ENCODE measurements at regions of chr18 and their contacts with region 1.

Region 1: DNA sequence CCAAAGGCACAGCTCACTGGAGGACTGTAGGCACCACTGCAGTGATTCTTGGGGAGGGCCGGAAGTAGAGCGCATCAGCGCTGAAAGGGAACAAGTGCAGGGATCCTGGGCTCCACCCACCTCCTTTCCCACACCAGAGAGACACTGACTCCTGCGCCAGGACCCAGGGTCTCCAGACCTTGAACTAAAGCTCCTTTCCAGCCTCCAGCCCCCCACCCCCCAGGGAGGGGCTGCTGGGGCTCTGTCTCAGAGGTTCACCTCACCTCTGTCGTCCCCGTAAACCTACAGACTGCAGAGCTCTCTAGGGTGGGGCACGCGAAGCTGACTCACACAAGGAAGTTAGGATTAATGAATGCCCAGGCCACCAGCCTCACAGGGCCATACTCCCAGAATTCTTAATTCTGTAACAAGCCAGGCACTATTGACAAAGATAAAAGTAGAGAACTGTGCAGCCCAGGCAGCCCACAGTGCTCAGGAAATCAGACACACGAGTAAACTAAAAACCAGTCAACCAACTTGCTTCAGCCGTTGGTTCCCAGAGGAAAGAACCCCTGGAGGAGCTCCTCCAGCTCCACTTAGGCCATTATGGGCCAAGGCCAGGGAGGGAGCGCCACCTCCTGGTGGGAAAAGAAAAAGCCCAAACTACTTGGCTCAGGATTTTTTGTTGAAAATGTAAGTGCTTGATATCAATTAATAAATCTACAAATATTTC is 45.1 kb upstream of the ACAA2 start:
- DNase-seq: peak; percentile 77
- H3K4me3 ChIP-seq: no peak overlapping the region
- H3K27ac ChIP-seq: peak overlapping the region; percentile 19
- H3K4me1 ChIP-seq: peaks cover 5% of the 10 kb centered on the region
- H3K27me3 ChIP-seq: no peaks in the 10 kb centered on the region
- CTCF ChIP-seq: peak; percentile 83 to 86
- POLR2A ChIP-seq: no peak

Region 2: DNA sequence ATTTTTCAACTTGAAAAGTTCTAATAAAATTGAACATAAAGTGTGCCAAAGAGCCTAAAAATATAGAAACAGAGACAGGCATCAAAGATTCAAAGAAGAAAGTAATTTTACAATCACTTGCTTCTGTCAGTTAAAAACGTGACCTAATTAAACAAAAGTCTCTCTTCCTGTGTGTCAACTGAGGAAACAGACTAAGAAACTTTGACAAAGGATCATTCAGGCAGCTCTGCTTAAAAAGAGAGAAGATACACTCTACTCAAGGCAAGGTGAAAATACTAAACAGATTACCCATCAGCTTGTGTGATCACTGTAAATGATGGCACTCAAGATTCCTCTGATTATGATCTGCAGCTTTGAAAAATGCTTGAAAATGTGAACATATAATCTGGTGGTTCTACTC is 445.8 kb before region 1 on chr18:
- CTCF ChIA-PET with region 1: no interaction called
- POLR2A ChIA-PET with region 1: no interaction called
- dilution Hi-C with region 1: no loop called
- intact Hi-C with region 1: no loop called
- DNase-seq: peak; percentile 35
- H3K4me3 ChIP-seq: no peak overlapping the region
- H3K27ac ChIP-seq: peak overlapping the region; percentile 56
- H3K4me1 ChIP-seq: peaks cover 18% of the 10 kb centered on the region
- H3K27me3 ChIP-seq: no peaks in the 10 kb centered on the region
- CTCF ChIP-seq: no peak
- POLR2A ChIP-seq: no peak

Region 3: DNA sequence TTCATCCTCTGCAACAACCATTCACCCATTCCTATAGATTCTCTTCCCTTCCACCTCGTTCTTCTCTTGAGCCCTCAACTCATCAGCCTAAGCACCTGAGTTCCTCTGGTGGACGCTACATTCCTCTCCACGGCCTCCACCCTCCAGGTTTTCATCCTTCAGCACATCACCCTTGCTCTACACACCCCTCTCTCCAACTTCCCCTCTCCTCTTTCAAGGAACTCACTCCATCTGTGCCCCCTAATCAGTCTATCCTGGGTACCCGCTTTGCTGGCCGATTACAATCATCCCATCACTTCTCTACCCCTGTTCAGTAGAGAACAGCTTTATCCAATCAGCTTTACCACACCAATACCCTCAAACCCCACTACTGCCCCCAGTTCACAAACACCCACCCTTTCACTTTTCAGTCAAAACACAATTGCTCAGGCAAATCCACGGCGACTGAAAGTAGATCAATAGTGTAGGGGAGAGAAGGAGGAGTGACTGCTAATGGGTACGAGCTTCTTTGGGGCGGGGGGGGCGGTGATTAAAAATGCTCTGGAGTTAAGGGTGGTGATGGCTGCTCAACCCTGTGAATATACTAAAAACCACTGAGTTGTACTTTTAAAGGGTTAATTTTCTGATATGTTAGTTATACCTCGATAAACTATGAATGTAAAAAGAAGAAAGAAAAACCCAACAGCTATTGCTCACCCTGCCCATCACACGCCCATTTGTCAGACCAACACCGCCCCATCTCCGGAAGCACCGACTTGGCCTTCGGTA is 398.9 kb before region 1 on chr18:
- CTCF ChIA-PET with region 1: interaction called, 33 read pairs
- POLR2A ChIA-PET with region 1: no interaction called
- dilution Hi-C with region 1: no loop called
- intact Hi-C with region 1: loop called (anchors 1 kb)
- DNase-seq: peak; percentile 8
- H3K4me3 ChIP-seq: peak overlapping the region; percentile 57 to 99 (median 87)
- H3K27ac ChIP-seq: peak overlapping the region; percentile 49
- H3K4me1 ChIP-seq: peaks cover 18% of the 10 kb centered on the region
- H3K27me3 ChIP-seq: no peaks in the 10 kb centered on the region
- CTCF ChIP-seq: no peak
- POLR2A ChIP-seq: no peak

Region 4: DNA sequence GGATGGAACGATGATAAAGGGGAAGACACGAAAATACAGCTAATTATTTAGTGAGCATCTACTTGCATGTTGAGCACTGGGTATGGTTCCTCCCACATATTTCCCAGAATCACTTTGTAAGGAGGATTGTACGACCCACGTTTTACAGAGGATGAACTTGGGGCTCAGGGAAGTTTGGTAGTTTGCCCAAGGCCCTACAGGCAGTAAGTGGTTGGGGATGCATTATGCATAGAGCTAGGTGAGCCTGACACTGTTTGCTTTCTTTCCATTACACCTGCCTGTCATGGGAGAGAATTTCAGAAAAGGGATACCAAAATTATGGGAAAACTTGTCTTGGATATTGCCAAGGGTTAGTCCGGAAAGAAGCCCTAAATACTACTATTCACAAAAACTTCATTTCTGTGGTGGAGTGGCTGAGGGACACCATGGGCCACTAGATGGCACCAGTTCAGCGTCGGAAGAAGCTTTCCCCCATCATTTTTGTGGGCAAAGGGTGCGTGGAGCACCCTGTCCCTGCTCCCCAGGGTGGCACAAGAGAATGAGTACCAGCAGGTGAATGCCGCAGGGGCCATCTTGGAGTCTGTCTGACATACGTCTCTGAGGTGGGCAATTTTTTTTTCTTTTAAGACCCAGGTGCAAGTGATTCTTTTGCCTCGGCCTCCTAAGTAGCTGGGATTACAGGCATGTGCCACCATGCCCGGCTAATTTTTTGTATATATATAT is 347.9 kb before region 1 on chr18:
- CTCF ChIA-PET with region 1: interaction called, 452 read pairs
- POLR2A ChIA-PET with region 1: no interaction called
- dilution Hi-C with region 1: loop called (anchors 25 kb)
- intact Hi-C with region 1: loop called (anchors 1 kb)
- DNase-seq: peak; percentile 51
- H3K4me3 ChIP-seq: no peak overlapping the region
- H3K27ac ChIP-seq: no peak overlapping the region
- H3K4me1 ChIP-seq: no peaks in the 10 kb centered on the region
- H3K27me3 ChIP-seq: peaks cover 3 to 4% of the 10 kb centered on the region in 2 experiments
- CTCF ChIP-seq: peak; percentile 74 to 81
- POLR2A ChIP-seq: no peak

Region 5: DNA sequence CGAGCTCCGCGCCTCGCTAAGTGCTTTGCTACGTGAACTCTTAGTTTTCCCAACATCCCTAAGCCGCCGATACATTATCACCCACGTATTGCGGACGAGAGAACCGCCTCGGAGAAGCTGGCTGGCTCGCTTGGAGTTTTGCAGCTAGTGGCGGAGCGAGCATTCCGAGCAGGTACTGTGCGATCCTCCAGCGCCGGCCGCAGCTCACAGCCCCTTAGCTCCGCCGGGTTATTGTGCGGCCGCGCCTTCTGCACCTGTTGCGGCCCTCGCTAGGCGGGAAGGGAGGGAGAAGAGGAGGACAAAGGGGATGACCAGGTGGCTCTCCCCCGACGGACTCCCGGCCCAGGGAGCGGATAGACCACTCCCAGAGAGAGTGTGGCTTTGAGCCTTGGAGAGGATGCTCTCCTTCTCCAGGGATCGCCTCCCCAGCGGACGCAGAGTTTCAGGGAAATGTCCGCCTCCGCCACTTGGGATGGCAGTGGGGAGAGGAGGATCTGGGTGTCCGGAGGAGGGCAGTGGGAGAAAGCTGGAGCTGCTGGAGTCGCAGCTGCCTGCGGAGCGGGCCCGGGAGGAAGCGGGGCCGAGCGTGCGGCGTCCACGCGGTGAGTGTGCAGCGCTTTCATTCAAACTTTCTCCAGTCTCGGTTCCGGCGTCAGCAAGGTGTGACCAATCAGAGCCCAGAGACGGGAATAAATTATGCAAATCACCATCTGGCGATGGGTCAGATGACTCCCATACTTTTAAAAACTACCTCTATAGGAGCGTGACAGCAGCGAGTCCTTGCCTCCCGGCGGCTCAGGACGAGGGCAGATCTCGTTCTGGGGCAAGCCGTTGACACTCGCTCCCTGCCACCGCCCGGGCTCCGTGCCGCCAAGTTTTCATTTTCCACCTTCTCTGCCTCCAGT is 296.9 kb before region 1 on chr18 and contains the start of gene LIPG:
- CTCF ChIA-PET with region 1: interaction called, 162 read pairs
- POLR2A ChIA-PET with region 1: no interaction called
- dilution Hi-C with region 1: no loop called
- intact Hi-C with region 1: loop called (anchors 1 kb)
- DNase-seq: peak; percentile 74
- H3K4me3 ChIP-seq: peak within 1 kb of the TSS; percentile 34 to 83 (median 67)
- H3K27ac ChIP-seq: peak within 1 kb of the TSS; percentile 49
- H3K4me1 ChIP-seq: peaks cover 37% of the 10 kb centered on the region
- H3K27me3 ChIP-seq: no peaks in the 10 kb centered on the region
- CTCF ChIP-seq: no peak
- POLR2A ChIP-seq: peak; percentile 69
- total RNA-seq, gene LIPG: 80.6 and 96.2 TPM in 2 replicates

Region 6: DNA sequence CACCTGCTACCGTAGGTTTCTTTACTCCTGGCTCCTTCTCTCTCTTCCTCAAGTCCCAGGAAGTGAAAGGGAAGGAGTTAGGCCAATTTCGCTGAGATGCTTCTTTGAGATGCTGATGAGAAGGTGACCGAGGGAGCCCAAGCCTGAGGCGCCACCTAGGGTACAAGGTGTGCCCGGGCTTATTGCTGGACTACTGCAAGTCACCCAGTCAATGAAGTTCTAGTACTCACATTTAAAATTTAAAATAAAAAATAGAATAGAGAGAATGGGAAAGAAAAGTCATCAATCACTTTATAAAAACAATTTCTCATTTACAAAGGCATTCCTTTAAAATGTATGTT is 90.4 kb before region 1 on chr18:
- CTCF ChIA-PET with region 1: interaction called, 31 read pairs
- POLR2A ChIA-PET with region 1: no interaction called
- dilution Hi-C with region 1: no loop called
- intact Hi-C with region 1: loop called (anchors 1 kb)
- DNase-seq: peak; percentile 62
- H3K4me3 ChIP-seq: no peak overlapping the region
- H3K27ac ChIP-seq: no peak overlapping the region
- H3K4me1 ChIP-seq: no peaks in the 10 kb centered on the region
- H3K27me3 ChIP-seq: no peaks in the 10 kb centered on the region
- CTCF ChIP-seq: peak; percentile 69 to 75
- POLR2A ChIP-seq: no peak

Region 7: GRCh38 chr18:49834258-49834657 is 24.2 kb before region 1 on chr18:
- CTCF ChIA-PET with region 1: interaction called, 10 read pairs
- POLR2A ChIA-PET with region 1: no interaction called
- dilution Hi-C with region 1: no loop called
- intact Hi-C with region 1: no loop called
- DNase-seq: no peak
- H3K4me3 ChIP-seq: no peak overlapping the region
- H3K27ac ChIP-seq: no peak overlapping the region
- H3K4me1 ChIP-seq: no peaks in the 10 kb centered on the region
- H3K27me3 ChIP-seq: no peaks in the 10 kb centered on the region
- CTCF ChIP-seq: no peak
- POLR2A ChIP-seq: no peak

Region 8: GRCh38 chr18:49976795-49977560 is 118.5 kb after region 1 on chr18:
- CTCF ChIA-PET with region 1: no interaction called
- POLR2A ChIA-PET with region 1: no interaction called
- dilution Hi-C with region 1: no loop called
- intact Hi-C with region 1: no loop called
- DNase-seq: no peak
- H3K4me3 ChIP-seq: no peak overlapping the region
- H3K27ac ChIP-seq: no peak overlapping the region
- H3K4me1 ChIP-seq: no peaks in the 10 kb centered on the region
- H3K27me3 ChIP-seq: no peaks in the 10 kb centered on the region
- CTCF ChIP-seq: no peak
- POLR2A ChIP-seq: no peak

Measured in endothelial cell of umbilical vein (primary cell).